ENCODE measurements at regions of chr3 and their contacts with region 1.

Region 1: GRCh38 chr3:187319699-187320302 is 28.3 kb upstream of the MASP1 start:
- DNase-seq: peak; percentile 66 to 84 (median 76)
- H3K4me3 ChIP-seq: no peak overlapping the region
- H3K27ac ChIP-seq: no peak overlapping the region
- H3K4me1 ChIP-seq: peaks cover 0 to 7% (median 3%) of the 10 kb centered on the region in 4 experiments
- H3K27me3 ChIP-seq: peaks cover 2 to 10% (median 8%) of the 10 kb centered on the region in 5 experiments

Region 2: GRCh38 chr3:187572441-187572840 is 252.6 kb after region 1 on chr3:
- CTCF ChIA-PET with region 1: no interaction called
- POLR2A ChIA-PET with region 1: no interaction called
- DNase-seq: no peak
- H3K4me3 ChIP-seq: no peak overlapping the region
- H3K27ac ChIP-seq: no peak overlapping the region
- H3K4me1 ChIP-seq: peaks cover 0 to 2% (median 0%) of the 10 kb centered on the region in 4 experiments
- H3K27me3 ChIP-seq: peaks cover 0 to 4% (median 0%) of the 10 kb centered on the region in 5 experiments

Region 3: DNA sequence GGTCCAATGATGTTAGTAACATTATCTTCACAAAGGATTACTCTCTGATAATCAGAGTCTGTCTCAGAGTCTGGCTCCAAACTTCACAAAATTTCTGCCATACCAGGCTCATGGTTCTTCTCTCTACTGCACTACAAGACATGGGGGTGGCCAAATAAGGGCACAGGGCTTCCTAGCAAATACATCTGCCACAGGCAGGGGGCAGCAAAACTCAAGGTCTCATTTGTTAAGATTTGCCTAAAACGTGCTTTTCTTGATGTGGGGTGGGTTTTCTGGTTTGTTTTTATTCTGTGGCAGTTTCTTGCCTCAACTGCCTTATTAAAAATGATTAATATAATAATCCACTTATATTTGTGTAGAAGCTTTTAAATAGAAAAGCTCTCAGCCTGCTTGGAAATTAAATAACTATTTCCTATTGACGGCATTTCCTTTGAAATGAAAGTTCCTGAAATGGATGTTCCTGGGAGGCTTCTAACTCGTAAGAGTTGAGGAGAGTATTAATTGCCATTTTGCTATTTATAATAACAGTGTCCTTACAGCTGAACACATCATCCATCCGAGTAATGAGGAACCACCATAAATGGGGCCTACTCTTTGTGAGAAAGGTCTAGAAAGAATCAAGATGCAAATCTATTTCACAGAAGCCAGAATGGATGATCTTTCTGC is 296.6 kb after region 1 on chr3:
- CTCF ChIA-PET with region 1: interaction called, 13 read pairs
- POLR2A ChIA-PET with region 1: no interaction called
- DNase-seq: peak; percentile 55 to 82 (median 78)
- H3K4me3 ChIP-seq: no peak overlapping the region
- H3K27ac ChIP-seq: no peak overlapping the region
- H3K4me1 ChIP-seq: no peaks in the 10 kb centered on the region
- H3K27me3 ChIP-seq: peaks cover 0 to 2% (median 0%) of the 10 kb centered on the region in 5 experiments

Region 4: GRCh38 chr3:187669675-187670504 is 350.1 kb after region 1 on chr3 and contains the start of gene SST:
- CTCF ChIA-PET with region 1: interaction called, 376 read pairs
- POLR2A ChIA-PET with region 1: no interaction called
- DNase-seq: peak; percentile 38 to 69 (median 68)
- H3K4me3 ChIP-seq: no peak within 1 kb of the TSS
- H3K27ac ChIP-seq: no peak within 1 kb of the TSS
- H3K4me1 ChIP-seq: no peaks in the 10 kb centered on the region
- H3K27me3 ChIP-seq: peaks cover 13 to 50% (median 26%) of the 10 kb centered on the region in 5 experiments

Region 5: GRCh38 chr3:187705164-187705563 is 385.4 kb after region 1 on chr3:
- CTCF ChIA-PET with region 1: interaction called, 99 read pairs
- POLR2A ChIA-PET with region 1: no interaction called
- DNase-seq: no peak
- H3K4me3 ChIP-seq: no peak overlapping the region
- H3K27ac ChIP-seq: no peak overlapping the region
- H3K4me1 ChIP-seq: no peaks in the 10 kb centered on the region
- H3K27me3 ChIP-seq: peaks cover 0 to 2% (median 0%) of the 10 kb centered on the region in 5 experiments

Region 6: GRCh38 chr3:187714404-187714979 is 394.7 kb after region 1 on chr3:
- CTCF ChIA-PET with region 1: interaction called, 99 read pairs
- POLR2A ChIA-PET with region 1: no interaction called
- DNase-seq: peak; percentile 67 to 86 (median 78)
- H3K4me3 ChIP-seq: no peak overlapping the region
- H3K27ac ChIP-seq: no peak overlapping the region
- H3K4me1 ChIP-seq: no peaks in the 10 kb centered on the region
- H3K27me3 ChIP-seq: no peaks in the 10 kb centered on the region

Measured in common myeloid progenitor, CD34-positive (primary cell).